HCT116 (cell line): ENCODE measurements at regions of chr11 and their contacts with region 1.

Region 1: DNA sequence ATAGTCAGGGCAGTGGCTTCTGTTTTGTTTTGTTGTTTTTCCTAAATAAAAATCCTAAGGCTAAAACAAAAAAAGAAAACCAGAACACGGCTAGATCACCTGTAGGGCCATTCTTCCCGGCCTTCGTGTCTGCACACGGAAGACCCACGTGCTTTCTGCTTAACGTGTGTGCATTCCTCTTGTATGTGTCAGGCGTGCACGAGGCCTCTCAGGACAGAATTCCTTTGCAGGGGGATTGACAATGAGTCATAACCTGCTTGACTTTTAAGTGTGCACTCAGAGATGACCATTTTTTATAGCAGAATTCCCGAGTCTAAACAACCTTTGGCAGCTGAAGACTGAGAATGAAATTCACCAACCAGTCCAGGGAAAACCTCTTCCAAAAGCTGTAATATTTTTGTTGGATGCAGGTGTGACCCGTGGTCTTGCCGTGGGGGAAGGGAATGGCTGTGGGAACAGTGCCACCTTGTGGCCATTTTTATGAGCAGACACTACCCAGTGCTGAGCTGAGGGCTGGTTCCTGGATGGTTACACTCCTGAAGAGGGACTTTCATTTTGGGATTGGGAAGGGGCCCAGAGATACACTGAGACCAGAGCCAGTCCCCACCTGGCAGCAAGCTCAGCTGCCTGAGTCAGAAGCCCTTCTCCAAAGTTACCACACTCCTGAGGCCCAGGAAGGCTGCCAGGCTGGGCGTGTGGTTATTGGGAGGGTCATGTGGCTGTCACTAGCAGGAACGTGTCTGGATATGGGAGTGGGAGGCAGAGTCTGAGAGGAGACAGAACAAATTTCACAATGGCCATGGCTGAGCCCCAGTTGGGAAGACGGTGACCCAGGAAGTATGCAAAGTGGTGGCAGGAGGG is 35.8 kb upstream of the DKK3 start:
- DNase-seq: peak; percentile 92
- ATAC-seq: peak; percentile 88
- H3K4me3 ChIP-seq: peak overlapping the region; percentile 27 to 43; a peak in 3 of 4 replicates
- H3K27ac ChIP-seq: peak overlapping the region; percentile 51; the same call in 1 of the 2 replicates
- H3K4me1 ChIP-seq: peaks cover 8 to 45% of the 10 kb centered on the region in 2 experiments; a peak in 2 of 4 replicates
- H3K27me3 ChIP-seq: no peaks in the 10 kb centered on the region
- CTCF ChIP-seq: peak; percentile 84 to 97 (median 93)
- POLR2A ChIP-seq: no peak
- RAD21 ChIP-seq: peak; percentile 99

Region 2: GRCh38 chr11:11044137-11044855 is 999.9 kb before region 1 on chr11:
- CTCF ChIA-PET with region 1: no interaction called
- POLR2A ChIA-PET with region 1: no interaction called
- RAD21 ChIA-PET with region 1: no interaction called
- intact Hi-C with region 1: loop called (anchors 5 kb)
- DNase-seq: no peak
- ATAC-seq: no peak
- H3K4me3 ChIP-seq: no peak overlapping the region
- H3K27ac ChIP-seq: no peak overlapping the region
- H3K4me1 ChIP-seq: no peaks in the 10 kb centered on the region
- H3K27me3 ChIP-seq: no peaks in the 10 kb centered on the region
- CTCF ChIP-seq: no peak
- POLR2A ChIP-seq: no peak
- RAD21 ChIP-seq: no peak

Region 3: GRCh38 chr11:11931461-11932055 is 112.6 kb before region 1 on chr11:
- CTCF ChIA-PET with region 1: interaction called, 29 read pairs
- POLR2A ChIA-PET with region 1: no interaction called
- RAD21 ChIA-PET with region 1: interaction called, 5 to 9 read pairs
- intact Hi-C with region 1: loop called (anchors 1 kb)
- DNase-seq: peak; percentile 38
- ATAC-seq: peak; percentile 87
- H3K4me3 ChIP-seq: no peak overlapping the region
- H3K27ac ChIP-seq: no peak overlapping the region
- H3K4me1 ChIP-seq: no peaks in the 10 kb centered on the region
- H3K27me3 ChIP-seq: no peaks in the 10 kb centered on the region
- CTCF ChIP-seq: peak; percentile 47 to 72 (median 67); a peak in 5 of 6 replicates
- POLR2A ChIP-seq: no peak
- RAD21 ChIP-seq: peak; percentile 80

Region 4: GRCh38 chr11:12087075-12088004 is 43.2 kb after region 1 on chr11:
- CTCF ChIA-PET with region 1: interaction called, 11 read pairs
- POLR2A ChIA-PET with region 1: no interaction called
- RAD21 ChIA-PET with region 1: interaction called, 3 to 4 read pairs
- intact Hi-C with region 1: no loop called
- DNase-seq: peak; percentile 38
- ATAC-seq: peak; percentile 68
- H3K4me3 ChIP-seq: peak overlapping the region; percentile 17 to 50; a peak in 3 of 4 replicates
- H3K27ac ChIP-seq: peak overlapping the region; percentile 73
- H3K4me1 ChIP-seq: peaks cover 48 to 72% of the 10 kb centered on the region in 2 experiments
- H3K27me3 ChIP-seq: no peaks in the 10 kb centered on the region
- CTCF ChIP-seq: peak in 2 of 3 experiments; percentile 34 to 40; a peak in 3 of 6 replicates
- POLR2A ChIP-seq: no peak
- RAD21 ChIP-seq: no peak

Region 5: GRCh38 chr11:12281571-12282478 is 237.6 kb after region 1 on chr11:
- CTCF ChIA-PET with region 1: interaction called, 104 read pairs
- POLR2A ChIA-PET with region 1: interaction called, 8 read pairs
- RAD21 ChIA-PET with region 1: interaction called, 8 to 16 read pairs
- intact Hi-C with region 1: loop called (anchors 1 kb)
- DNase-seq: peak; percentile 58
- ATAC-seq: peak; percentile 83
- H3K4me3 ChIP-seq: no peak overlapping the region
- H3K27ac ChIP-seq: no peak overlapping the region
- H3K4me1 ChIP-seq: peaks cover 10 to 29% of the 10 kb centered on the region in 2 experiments
- H3K27me3 ChIP-seq: no peaks in the 10 kb centered on the region
- CTCF ChIP-seq: peak; percentile 91 to 96 (median 95)
- POLR2A ChIP-seq: no peak
- RAD21 ChIP-seq: peak; percentile 100

Region 6: DNA sequence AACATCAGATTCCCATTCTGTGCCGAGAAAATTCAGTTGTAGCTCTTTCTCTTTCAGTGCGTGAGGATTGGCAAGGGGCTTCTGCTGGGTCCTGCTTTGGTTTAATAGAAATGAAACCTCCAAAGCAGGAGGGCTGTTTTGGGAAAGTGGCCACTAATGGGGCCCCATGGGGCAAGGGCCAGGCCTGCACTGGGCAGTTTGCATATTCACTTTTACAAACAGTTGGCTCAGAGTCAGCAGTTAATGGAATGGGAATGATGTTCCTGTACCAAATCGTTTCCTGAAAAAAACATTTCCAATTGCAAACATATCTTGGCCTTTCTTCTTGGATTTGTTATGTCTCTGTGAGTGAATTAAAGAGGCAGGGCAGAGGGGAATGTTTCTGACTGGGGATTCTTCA is 425.3 kb after region 1 on chr11:
- CTCF ChIA-PET with region 1: no interaction called
- POLR2A ChIA-PET with region 1: no interaction called
- RAD21 ChIA-PET with region 1: no interaction called
- intact Hi-C with region 1: no loop called
- DNase-seq: no peak
- ATAC-seq: no peak
- H3K4me3 ChIP-seq: no peak overlapping the region
- H3K27ac ChIP-seq: no peak overlapping the region
- H3K4me1 ChIP-seq: no peaks in the 10 kb centered on the region
- H3K27me3 ChIP-seq: no peaks in the 10 kb centered on the region
- CTCF ChIP-seq: no peak
- POLR2A ChIP-seq: no peak
- RAD21 ChIP-seq: no peak